PC-3 (cell line): ENCODE measurements at regions of chr14 and their contacts with region 1.

Region 1: GRCh38 chr14:97299661-97300060 is 502.5 kb downstream of the VRK1 start:
- DNase-seq: no peak
- ATAC-seq: no peak; the same call in 1 of the 2 replicates
- H3K4me3 ChIP-seq: no peak overlapping the region
- H3K27ac ChIP-seq: no peak overlapping the region
- H3K4me1 ChIP-seq: no peaks in the 10 kb centered on the region
- H3K27me3 ChIP-seq: peaks cover 97% of the 10 kb centered on the region
- CTCF ChIP-seq: peak; percentile 47

Region 2: GRCh38 chr14:95835331-95835730 is 1464.3 kb before region 1 on chr14:
- CTCF ChIA-PET with region 1: no interaction called
- POLR2A ChIA-PET with region 1: no interaction called
- intact Hi-C with region 1: no loop called
- DNase-seq: no peak
- ATAC-seq: no peak
- H3K4me3 ChIP-seq: no peak overlapping the region
- H3K27ac ChIP-seq: no peak overlapping the region
- H3K4me1 ChIP-seq: no peaks in the 10 kb centered on the region
- H3K27me3 ChIP-seq: no peaks in the 10 kb centered on the region
- CTCF ChIP-seq: no peak

Region 3: GRCh38 chr14:97005934-97006333 is 293.7 kb before region 1 on chr14:
- CTCF ChIA-PET with region 1: no interaction called
- POLR2A ChIA-PET with region 1: no interaction called
- intact Hi-C with region 1: no loop called
- DNase-seq: no peak
- ATAC-seq: no peak
- H3K4me3 ChIP-seq: no peak overlapping the region
- H3K27ac ChIP-seq: no peak overlapping the region
- H3K4me1 ChIP-seq: no peaks in the 10 kb centered on the region
- H3K27me3 ChIP-seq: no peaks in the 10 kb centered on the region
- CTCF ChIP-seq: no peak

Region 4: DNA sequence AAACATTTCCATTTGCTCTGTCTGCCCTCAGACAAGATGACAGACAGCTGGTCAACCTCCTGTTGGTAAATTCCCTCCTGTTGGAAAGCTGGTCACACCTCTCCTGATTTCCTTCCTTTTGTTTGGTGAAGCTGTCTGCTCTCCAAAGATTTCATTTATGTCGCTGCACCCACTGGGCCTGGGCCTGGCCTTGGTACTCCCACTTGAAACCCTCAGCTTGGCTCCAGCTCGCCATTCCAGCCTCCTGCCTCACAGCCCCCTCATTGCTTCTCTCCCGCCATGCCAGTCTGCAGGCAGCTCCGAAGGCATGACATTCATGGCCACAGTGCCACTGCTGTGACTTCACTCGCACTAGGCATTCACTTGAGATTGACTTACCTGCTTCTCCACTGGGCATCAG is 50.7 kb before region 1 on chr14:
- CTCF ChIA-PET with region 1: no interaction called
- POLR2A ChIA-PET with region 1: no interaction called
- intact Hi-C with region 1: loop called (anchors 5 kb)
- DNase-seq: no peak
- ATAC-seq: no peak
- H3K4me3 ChIP-seq: no peak overlapping the region
- H3K27ac ChIP-seq: no peak overlapping the region
- H3K4me1 ChIP-seq: 0 out of 2 replicates have a peak, but pooled peaks cover 6% of the 10 kb centered on the region
- H3K27me3 ChIP-seq: peaks cover 50% of the 10 kb centered on the region
- CTCF ChIP-seq: no peak

Region 5: DNA sequence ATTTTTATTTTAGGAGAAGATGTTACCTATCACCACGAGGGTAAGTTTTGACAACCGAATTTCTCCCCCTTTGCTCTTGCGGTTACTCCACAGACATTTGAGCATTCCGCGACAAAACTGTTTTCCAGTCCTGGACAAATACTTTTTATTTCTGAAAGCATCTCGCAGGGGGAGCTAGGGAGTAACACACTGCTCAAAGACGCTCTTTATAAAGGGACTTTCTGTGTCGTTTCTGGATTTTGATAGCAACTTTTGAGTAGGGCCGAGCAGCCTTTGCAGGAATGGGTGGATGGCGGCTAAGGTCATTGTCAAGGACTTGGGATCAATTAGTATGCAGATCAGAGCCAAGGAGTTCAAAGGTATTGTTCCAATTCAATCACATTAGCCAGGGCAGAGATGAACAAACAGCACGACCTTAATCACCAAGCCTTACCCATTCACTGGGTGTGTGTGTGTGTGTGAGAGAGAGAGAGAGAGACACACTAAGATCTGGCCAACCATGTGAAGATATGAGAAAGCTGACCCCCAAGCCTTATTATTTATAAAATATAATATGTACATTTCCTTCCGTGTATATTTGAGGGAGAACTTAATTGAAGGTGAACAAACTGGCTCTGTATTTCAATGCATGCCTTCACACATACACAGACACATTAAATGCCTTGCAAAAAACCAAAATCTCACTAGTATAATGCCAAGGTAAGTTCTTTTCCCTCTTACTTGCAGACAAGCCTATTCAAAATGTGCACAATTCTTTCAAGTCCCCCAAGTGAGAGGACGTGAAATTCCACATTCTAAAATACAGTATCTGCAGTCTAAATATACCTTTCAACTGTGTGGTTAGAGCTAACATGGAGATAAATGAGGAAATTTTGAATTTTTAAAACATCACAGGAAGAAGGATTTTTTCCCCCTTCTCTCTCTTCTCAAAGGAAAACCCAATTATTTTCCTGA is 111.3 kb after region 1 on chr14:
- CTCF ChIA-PET with region 1: no interaction called
- POLR2A ChIA-PET with region 1: no interaction called
- intact Hi-C with region 1: loop called (anchors 5 kb)
- DNase-seq: peak; percentile 35
- ATAC-seq: peak; percentile 46; the same call in 1 of the 2 replicates
- H3K4me3 ChIP-seq: no peak overlapping the region
- H3K27ac ChIP-seq: 0 out of 2 replicates have a peak overlapping the region, but pooled peaks have one; percentile 8
- H3K4me1 ChIP-seq: no peaks in the 10 kb centered on the region
- H3K27me3 ChIP-seq: peaks cover 90% of the 10 kb centered on the region
- CTCF ChIP-seq: peak; percentile 43; the same call in 1 of the 2 replicates